ENCODE measurements at regions of chr1 and their contacts with region 1.

Region 1: DNA sequence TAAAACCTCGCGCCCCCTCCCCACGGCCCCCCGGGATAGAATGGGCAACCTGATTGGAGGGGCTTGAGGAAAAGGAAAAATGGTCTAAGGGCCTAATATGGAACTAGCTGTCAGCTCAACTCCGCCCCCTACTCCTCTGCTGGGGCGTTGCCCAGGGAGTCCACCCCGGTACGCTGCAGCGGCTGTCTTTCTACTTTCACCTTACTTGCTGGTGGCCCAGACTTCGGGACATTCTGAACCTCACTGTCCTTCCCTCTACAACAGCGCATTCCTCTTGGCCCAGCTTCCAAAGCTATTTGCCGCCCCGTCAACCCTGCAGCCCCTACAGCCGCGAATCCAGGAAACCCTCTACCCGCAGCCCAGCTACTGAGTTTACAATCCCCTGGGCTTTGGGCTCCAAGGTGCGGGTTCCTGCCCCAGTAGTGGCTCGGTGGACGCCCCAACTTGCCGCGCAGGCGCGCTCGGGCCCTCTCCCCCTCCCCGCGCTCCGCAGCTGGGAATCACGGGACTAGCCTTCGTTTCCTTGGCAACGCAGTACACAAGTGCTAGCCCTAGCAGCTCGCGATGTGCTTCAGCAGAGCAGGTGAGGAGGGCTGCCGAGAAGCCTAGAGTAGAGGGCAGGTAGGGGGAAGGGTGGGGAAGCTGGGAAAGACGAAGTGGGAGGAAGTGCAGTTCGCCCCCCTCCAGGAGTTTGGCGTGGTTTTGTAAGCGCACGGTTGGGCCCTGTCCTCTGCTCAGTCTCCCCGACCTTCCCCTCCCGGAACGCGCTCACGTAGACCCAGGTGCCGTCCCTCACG is 55.6 kb downstream of the CHIA start:
- DNase-seq: peak; percentile 96
- ATAC-seq: peak; percentile 92
- H3K4me3 Mint-ChIP-seq: peak overlapping the region; percentile 87
- H3K27ac Mint-ChIP-seq: peak overlapping the region; percentile 90
- H3K4me1 Mint-ChIP-seq: peaks cover 28% of the 10 kb centered on the region
- H3K27me3 Mint-ChIP-seq: peaks cover 3% of the 10 kb centered on the region; the same call in 1 of the 2 replicates
- CTCF ChIP-seq: no peak

Region 2: DNA sequence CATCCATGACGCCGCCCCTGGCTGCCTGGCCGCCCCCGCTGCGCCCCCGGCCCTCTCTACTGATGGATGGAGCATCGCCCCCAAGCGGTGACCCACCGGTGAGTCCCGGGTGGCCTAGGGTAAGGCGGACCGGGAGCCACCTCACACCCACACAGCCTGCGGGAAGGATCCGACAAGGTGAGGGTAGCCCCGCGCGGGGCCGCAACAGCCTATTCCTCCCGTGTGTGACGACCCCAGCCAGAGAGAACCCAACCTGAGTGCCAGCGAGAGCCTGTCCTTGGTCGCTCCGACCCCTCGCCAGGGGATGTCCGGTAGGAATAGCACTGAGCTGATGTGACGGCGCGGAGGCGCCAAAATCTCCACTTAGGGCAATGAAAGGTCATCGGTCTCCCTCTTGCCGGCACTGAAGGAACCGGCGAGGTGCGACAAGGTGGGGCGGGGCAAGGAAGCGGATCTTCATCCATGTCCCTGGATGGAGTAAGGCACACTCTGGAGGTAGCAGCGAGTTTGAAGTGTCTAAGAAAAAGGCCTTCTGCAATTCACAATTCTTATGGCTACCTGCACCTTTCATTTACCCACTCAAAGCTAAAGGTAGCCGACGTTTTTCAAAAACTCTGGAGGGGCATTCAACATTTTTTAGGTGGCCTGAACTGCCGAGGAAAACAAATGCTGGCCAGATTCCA is 75.4 kb before region 1 on chr1:
- CTCF ChIA-PET with region 1: interaction called, 11 read pairs
- POLR2A ChIA-PET with region 1: no interaction called
- DNase-seq: peak; percentile 52
- ATAC-seq: peak; percentile 62
- H3K4me3 Mint-ChIP-seq: peak overlapping the region; percentile 59
- H3K27ac Mint-ChIP-seq: no peak overlapping the region
- H3K4me1 Mint-ChIP-seq: peaks cover 24% of the 10 kb centered on the region
- H3K27me3 Mint-ChIP-seq: peaks cover 20% of the 10 kb centered on the region
- CTCF ChIP-seq: no peak

Region 3: GRCh38 chr1:111399792-111400610 is 53.7 kb after region 1 on chr1:
- CTCF ChIA-PET with region 1: interaction called, 12 read pairs
- POLR2A ChIA-PET with region 1: no interaction called
- DNase-seq: peak; percentile 37
- ATAC-seq: no peak
- H3K4me3 Mint-ChIP-seq: no peak overlapping the region
- H3K27ac Mint-ChIP-seq: no peak overlapping the region
- H3K4me1 Mint-ChIP-seq: no peaks in the 10 kb centered on the region
- H3K27me3 Mint-ChIP-seq: no peaks in the 10 kb centered on the region; the same call in 1 of the 2 replicates
- CTCF ChIP-seq: peak; percentile 69